Right ventricle myocardium superior (tissue), 1 donor: ENCODE measurements at regions of chr9 and their contacts with region 1.

Region 1: GRCh38 chr9:130707225-130707976 is 13.8 kb downstream of the EXOSC2 start:
- DNase-seq: no peak
- ATAC-seq: peak; percentile 30

Region 2: GRCh38 chr9:130364619-130365322 is 342.6 kb before region 1 on chr9:
- intact Hi-C with region 1: no loop called
- DNase-seq: no peak
- ATAC-seq: no peak

Region 3: GRCh38 chr9:130490981-130491380 is 216.4 kb before region 1 on chr9:
- intact Hi-C with region 1: no loop called
- DNase-seq: no peak
- ATAC-seq: no peak

Region 4: GRCh38 chr9:130927995-130928900 is 220.8 kb after region 1 on chr9:
- intact Hi-C with region 1: no loop called
- DNase-seq: peak; percentile 70
- ATAC-seq: peak; percentile 43

Region 5: DNA sequence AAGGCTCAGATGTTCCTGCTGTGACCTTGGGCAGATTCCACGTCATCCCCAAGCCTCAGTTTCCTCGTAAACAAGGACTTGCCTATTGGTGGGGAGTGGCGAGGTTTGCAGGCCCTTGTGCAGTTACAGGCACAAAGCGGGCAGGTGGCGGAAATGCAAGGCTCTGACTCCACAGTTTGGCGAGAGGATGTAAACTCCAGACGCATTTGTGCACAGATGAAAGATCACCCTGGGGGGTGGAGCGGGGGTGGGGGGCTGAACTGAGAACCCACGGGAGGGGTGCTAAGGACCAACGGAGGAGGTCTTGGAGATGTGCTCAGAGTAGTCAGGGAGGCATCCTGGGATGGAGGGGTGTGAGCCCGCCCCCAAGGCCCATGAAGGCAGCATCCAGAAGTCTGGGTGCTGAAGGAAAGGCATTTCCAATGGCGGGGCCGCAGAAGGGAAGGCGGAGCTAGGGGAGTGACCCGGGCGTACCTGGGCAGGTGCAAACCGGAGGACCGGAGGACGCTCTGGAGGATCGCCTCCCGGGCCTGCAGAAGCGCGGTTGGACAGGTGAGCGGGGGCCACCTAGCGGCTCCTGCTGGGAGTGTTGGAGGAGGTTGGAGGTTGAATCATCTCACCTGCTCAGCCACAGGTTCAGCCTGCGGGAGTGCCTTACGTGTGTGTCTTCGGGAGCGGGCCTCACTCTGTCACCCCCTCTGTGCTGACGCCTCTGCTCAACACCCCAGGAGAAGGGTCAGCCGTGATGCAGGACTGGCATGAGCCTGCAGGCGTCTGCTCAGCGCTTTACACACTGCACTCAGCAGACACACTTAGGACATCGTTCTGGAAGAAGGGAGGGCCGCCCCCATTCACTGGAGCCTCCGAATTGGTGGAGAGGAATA is 233.5 kb after region 1 on chr9:
- intact Hi-C with region 1: loop called (anchors 5 kb)
- DNase-seq: peak; percentile 76
- ATAC-seq: peak; percentile 84